H1 (cell line): ENCODE measurements at regions of chr15 and their contacts with region 1.

Region 1: DNA sequence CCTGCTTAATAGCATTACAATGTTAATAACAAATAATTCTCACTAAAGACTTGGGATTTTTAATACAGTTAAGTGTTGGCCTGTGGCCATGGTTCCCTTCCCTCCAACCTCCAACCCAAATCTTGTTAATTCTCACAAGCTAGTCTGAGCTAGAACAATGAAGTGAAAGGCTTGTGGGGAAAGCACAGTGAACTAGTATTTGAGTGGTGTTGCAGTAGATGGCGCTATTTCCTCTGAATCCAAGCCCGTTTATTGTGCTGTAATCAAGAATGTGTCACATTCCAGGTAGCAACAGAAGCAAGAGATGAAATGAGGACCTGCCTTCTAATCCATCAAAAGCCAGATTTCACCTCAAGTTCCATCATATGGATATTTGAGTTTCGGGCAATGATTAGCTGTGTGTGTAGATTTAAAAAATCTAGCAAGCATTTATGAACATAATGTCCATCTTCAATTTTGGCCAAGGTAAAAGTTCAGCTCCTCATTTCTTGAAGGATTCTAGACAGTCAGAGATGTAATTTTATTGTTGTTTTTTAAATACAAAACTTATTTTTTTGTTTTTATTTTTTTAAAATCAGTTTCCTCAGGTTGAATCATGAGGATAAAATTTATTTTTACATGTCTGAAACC is 160.7 kb downstream of the SQOR start:
- DNase-seq: peak in 1 of 2 experiments; percentile 25
- H3K4me3 ChIP-seq: no peak overlapping the region
- H3K27ac ChIP-seq: no peak overlapping the region
- H3K4me1 ChIP-seq: no peaks in the 10 kb centered on the region
- H3K27me3 ChIP-seq: no peaks in the 10 kb centered on the region
- CTCF ChIP-seq: peak in 2 of 3 experiments; percentile 76 to 92; a peak in 3 of 4 replicates
- EP300 ChIP-seq: no peak
- POLR2A ChIP-seq: no peak
- RAD21 ChIP-seq: peak; percentile 87 to 88

Region 2: DNA sequence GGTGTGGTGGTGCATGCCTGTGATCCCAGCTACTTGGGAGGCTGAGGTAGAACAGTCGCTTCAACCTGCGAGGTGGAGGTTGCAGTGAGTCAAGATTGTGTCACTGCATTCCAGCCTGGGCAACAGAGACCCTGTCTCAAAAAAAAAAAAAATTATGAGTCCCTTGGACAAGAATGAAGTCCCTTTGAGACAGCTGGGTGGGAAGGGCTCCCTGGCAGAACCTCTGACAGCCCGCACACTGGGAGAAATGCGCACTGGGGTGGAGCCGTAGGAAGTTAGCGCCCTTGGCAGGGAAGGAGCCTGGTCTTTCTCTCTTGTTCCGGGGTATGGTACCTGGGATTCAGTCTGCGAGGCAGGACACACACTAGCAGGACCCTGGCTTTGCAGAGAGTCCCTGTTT is 324.4 kb before region 1 on chr15:
- CTCF ChIA-PET with region 1: no interaction called
- POLR2A ChIA-PET with region 1: no interaction called
- DNase-seq: no peak
- H3K4me3 ChIP-seq: no peak overlapping the region
- H3K27ac ChIP-seq: no peak overlapping the region
- H3K4me1 ChIP-seq: peaks cover 0 to 8% (median 6%) of the 10 kb centered on the region in 4 experiments; a peak in 4 of 7 replicates
- H3K27me3 ChIP-seq: peaks cover 76 to 95% (median 95%) of the 10 kb centered on the region in 4 experiments
- CTCF ChIP-seq: no peak
- EP300 ChIP-seq: no peak
- POLR2A ChIP-seq: no peak
- RAD21 ChIP-seq: no peak

Region 3: GRCh38 chr15:45705510-45706473 is 89.8 kb before region 1 on chr15:
- CTCF ChIA-PET with region 1: interaction called, 54 read pairs
- POLR2A ChIA-PET with region 1: no interaction called
- DNase-seq: peak; percentile 68 to 83
- H3K4me3 ChIP-seq: peak overlapping the region; percentile 38 to 72 (median 62)
- H3K27ac ChIP-seq: no peak overlapping the region
- H3K4me1 ChIP-seq: no peaks in the 10 kb centered on the region
- H3K27me3 ChIP-seq: peaks cover 0 to 3% (median 0%) of the 10 kb centered on the region in 4 experiments; a peak in 3 of 7 replicates
- CTCF ChIP-seq: peak; percentile 67 to 90 (median 74)
- EP300 ChIP-seq: 0 out of 3 replicates have a peak, but pooled peaks of 1 of the 2 experiments have one; percentile 4
- POLR2A ChIP-seq: no peak
- RAD21 ChIP-seq: peak; percentile 82 to 84

Region 4: GRCh38 chr15:45714590-45715488 is 80.7 kb before region 1 on chr15:
- CTCF ChIA-PET with region 1: interaction called, 89 read pairs
- POLR2A ChIA-PET with region 1: no interaction called
- DNase-seq: peak; percentile 38 to 81
- H3K4me3 ChIP-seq: no peak overlapping the region
- H3K27ac ChIP-seq: no peak overlapping the region
- H3K4me1 ChIP-seq: peaks cover 0 to 2% (median 0%) of the 10 kb centered on the region in 4 experiments; a peak in 2 of 7 replicates
- H3K27me3 ChIP-seq: no peaks in the 10 kb centered on the region
- CTCF ChIP-seq: peak; percentile 88 to 96 (median 93)
- EP300 ChIP-seq: no peak
- POLR2A ChIP-seq: no peak
- RAD21 ChIP-seq: peak; percentile 88 to 89

Region 5: GRCh38 chr15:45812200-45812599 is 16.6 kb after region 1 on chr15:
- CTCF ChIA-PET with region 1: interaction called, 10 read pairs
- POLR2A ChIA-PET with region 1: no interaction called
- DNase-seq: no peak
- H3K4me3 ChIP-seq: no peak overlapping the region
- H3K27ac ChIP-seq: no peak overlapping the region
- H3K4me1 ChIP-seq: no peaks in the 10 kb centered on the region; a peak in 2 of 7 replicates
- H3K27me3 ChIP-seq: no peaks in the 10 kb centered on the region
- CTCF ChIP-seq: no peak
- EP300 ChIP-seq: no peak
- POLR2A ChIP-seq: no peak
- RAD21 ChIP-seq: no peak

Region 6: GRCh38 chr15:45842151-45842550 is 46.6 kb after region 1 on chr15:
- CTCF ChIA-PET with region 1: interaction called, 12 read pairs
- POLR2A ChIA-PET with region 1: no interaction called
- DNase-seq: no peak
- H3K4me3 ChIP-seq: no peak overlapping the region
- H3K27ac ChIP-seq: no peak overlapping the region
- H3K4me1 ChIP-seq: no peaks in the 10 kb centered on the region
- H3K27me3 ChIP-seq: no peaks in the 10 kb centered on the region
- CTCF ChIP-seq: no peak
- EP300 ChIP-seq: no peak
- POLR2A ChIP-seq: no peak
- RAD21 ChIP-seq: no peak

Region 7: DNA sequence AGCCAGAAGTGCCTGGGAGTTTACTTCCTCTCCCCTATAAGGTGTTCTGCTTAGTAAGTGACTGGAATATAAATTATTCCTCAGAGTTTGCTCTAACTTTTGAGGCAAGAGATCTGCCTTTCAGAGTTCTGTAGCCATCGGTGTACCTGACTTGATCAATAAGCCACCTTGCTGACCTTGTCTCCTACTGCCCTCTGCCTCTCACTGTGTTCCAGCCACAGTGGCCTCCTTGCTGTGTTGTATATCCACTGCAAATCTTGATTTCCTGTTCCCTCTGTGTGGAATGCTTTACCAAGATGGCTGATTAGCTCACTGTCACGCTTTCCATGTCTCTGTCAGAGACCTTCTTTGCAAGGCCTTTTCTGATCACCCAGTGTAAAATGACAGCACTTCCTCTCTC is 281.7 kb after region 1 on chr15:
- CTCF ChIA-PET with region 1: interaction called, 17 read pairs
- POLR2A ChIA-PET with region 1: no interaction called
- DNase-seq: no peak
- H3K4me3 ChIP-seq: no peak overlapping the region
- H3K27ac ChIP-seq: no peak overlapping the region
- H3K4me1 ChIP-seq: 0 out of 7 replicates have a peak, but pooled peaks cover 0 to 2% (median 0%) of the 10 kb centered on the region in 4 experiments
- H3K27me3 ChIP-seq: no peaks in the 10 kb centered on the region
- CTCF ChIP-seq: peak in 2 of 3 experiments; percentile 5 to 7; a peak in 2 of 4 replicates
- EP300 ChIP-seq: no peak
- POLR2A ChIP-seq: no peak
- RAD21 ChIP-seq: peak; percentile 42 to 44; a peak in 3 of 4 replicates

Region 8: DNA sequence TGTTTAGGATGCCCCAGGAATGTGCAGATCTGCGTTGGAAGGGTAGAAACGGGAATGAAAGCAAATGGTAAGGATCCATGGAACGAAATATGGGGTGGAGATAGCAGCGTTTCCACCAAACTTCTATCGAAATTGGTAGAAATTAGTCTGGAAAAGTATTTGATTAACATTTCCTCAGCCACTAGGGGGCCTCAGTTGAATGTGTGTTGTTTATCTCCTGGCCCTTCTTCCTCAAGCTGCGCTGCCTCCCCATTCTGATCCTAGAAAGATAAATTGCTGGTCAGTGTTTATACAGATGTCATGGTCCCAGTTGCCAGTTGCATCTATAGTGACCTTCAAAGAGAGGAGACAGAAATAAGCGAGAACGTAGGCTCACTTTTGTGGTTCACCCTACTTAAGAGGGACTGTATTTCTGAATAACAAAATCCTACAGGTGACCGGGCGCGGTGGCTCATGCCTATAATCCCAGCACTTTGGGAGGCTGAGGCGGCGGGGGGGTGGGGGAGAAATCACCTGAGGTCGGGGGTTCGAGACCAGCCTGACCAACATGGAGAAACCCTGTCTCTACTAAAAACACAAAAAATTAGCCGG is 296.4 kb after region 1 on chr15:
- CTCF ChIA-PET with region 1: interaction called, 14 read pairs
- POLR2A ChIA-PET with region 1: no interaction called
- DNase-seq: peak; percentile 15 to 59
- H3K4me3 ChIP-seq: no peak overlapping the region
- H3K27ac ChIP-seq: no peak overlapping the region
- H3K4me1 ChIP-seq: no peaks in the 10 kb centered on the region
- H3K27me3 ChIP-seq: no peaks in the 10 kb centered on the region
- CTCF ChIP-seq: peak in 2 of 3 experiments; percentile 67 to 72; a peak in 3 of 4 replicates
- EP300 ChIP-seq: no peak
- POLR2A ChIP-seq: no peak
- RAD21 ChIP-seq: peak; percentile 87 to 89